ENCODE measurements at regions of chr5 and their contacts with region 1.

Region 1: GRCh38 chr5:87400305-87400899 is 12.3 kb downstream of the CCNH start:
- DNase-seq: peak; percentile 63
- H3K4me3 ChIP-seq: no peak overlapping the region
- H3K27ac ChIP-seq: no peak overlapping the region
- H3K4me1 ChIP-seq: peaks cover 6% of the 10 kb centered on the region
- CTCF ChIP-seq: peak; percentile 91

Region 2: DNA sequence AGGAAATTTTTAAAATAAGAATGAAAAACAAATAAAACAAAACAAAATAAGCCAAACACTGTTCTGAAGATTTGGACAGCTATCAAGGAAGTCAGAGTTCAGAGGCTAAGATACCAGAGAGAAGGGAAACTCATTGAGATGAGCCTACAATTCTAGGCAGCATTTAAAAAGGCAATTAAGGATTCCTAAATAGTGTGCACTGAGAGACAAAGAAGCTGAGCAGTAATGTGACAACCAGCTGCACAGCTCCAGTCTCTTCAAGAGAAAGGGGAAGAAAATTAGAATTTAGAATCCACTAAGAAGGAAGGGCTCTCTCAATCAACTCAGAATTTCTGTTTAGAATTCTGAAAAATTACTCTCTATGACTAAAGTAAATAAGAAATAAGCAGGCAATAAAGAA is 1029.3 kb before region 1 on chr5:
- CTCF ChIA-PET with region 1: no interaction called
- POLR2A ChIA-PET with region 1: no interaction called
- intact Hi-C with region 1: no loop called
- DNase-seq: no peak
- H3K4me3 ChIP-seq: no peak overlapping the region
- H3K27ac ChIP-seq: no peak overlapping the region
- H3K4me1 ChIP-seq: no peaks in the 10 kb centered on the region
- CTCF ChIP-seq: no peak

Region 3: DNA sequence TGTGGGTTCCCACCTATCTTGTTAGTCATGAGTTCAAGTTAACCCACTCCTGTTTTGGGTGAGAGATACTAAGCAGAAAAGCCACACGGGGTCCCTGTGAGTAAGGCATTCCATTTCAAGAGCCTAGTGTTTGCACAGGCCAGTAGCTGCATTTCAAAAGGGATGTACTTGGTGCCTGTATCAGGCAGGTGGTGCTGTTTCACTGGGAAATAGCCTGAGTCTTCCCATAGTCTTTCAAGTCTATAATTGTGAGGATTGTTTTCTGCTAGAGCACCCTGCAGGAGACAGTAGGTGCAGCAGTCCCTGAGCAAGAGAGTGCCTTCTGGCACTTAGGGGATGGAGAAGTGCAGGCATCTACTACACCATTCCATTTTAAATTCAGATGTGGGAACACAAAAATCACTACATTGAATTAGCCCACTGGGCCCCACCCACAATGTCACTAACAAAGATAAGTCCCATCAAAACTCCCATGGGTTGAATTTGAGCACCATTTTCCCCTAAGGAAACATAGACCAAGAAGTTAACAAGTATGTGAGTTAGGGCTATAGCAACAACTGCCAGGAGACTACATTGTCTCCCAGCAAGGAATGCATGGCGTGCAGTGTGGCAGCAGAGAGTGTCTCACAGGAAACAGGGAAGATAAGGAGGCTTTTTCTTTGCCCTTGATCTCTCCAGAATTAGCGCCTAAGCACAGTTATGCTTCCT is 519.5 kb before region 1 on chr5:
- CTCF ChIA-PET with region 1: interaction called, 4 read pairs
- POLR2A ChIA-PET with region 1: no interaction called
- intact Hi-C with region 1: loop called (anchors 5 kb)
- DNase-seq: peak; percentile 70
- H3K4me3 ChIP-seq: no peak overlapping the region
- H3K27ac ChIP-seq: no peak overlapping the region
- H3K4me1 ChIP-seq: no peaks in the 10 kb centered on the region
- CTCF ChIP-seq: peak; percentile 83

Region 4: DNA sequence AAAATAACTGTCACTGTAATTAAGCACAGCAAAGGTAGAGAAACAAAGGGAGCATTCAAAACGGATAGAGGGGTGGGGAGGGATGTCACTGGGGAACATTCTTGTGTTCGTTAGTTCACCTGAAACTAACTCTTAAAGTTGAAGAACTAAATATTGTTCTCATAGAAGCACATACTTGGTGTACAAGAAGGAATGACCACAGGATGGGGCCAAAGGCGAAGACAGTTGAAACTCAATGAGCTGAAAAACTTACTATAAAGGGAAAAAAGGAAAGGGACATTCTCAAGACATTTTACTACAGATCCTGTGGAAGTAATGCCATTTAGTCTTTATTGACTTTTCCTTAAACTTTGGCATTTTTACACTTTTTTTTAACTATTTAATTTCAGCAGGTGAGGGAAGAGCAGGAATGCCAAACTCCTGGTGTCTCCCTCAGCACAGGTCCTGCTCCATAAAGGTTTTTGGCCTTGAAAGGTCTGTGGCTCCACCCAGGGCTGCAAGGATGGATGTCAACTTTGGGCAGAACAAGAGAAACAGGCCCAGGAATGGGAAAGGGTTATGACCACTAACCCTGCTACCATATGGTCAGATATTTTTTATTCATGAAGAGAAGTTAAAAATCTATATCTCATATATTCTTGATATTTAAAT is 330.3 kb before region 1 on chr5:
- CTCF ChIA-PET with region 1: no interaction called
- POLR2A ChIA-PET with region 1: no interaction called
- intact Hi-C with region 1: loop called (anchors 5 kb)
- DNase-seq: peak; percentile 48
- H3K4me3 ChIP-seq: no peak overlapping the region
- H3K27ac ChIP-seq: no peak overlapping the region
- H3K4me1 ChIP-seq: peaks cover 23% of the 10 kb centered on the region
- CTCF ChIP-seq: peak; percentile 69

Region 5: DNA sequence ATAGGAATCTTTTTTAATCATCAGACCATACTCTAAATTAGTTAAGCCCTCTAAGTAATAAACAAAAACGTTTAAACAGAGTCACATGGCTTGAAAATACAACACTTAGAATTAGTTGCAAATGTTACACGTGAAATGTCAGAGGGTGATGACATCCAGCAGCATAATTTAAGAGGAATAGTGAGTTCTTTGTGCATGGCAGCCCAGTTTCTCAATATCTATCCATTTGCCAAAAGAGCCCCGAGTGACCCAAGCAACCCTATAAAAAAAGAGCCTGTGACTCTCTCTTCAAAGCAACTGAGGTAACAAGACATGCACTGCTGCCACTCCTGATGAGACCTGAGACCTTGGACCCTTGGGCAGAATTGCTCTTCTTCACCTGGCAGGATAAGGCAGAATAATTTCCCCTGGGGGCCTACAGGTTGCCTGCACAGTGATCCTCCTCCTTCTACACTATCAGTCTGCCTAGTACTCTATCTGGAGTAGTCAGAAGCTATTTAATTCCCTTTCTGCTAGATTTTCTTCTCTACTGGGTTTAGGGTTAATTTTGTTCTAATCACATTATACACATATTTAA is 229.5 kb before region 1 on chr5:
- CTCF ChIA-PET with region 1: no interaction called
- POLR2A ChIA-PET with region 1: no interaction called
- intact Hi-C with region 1: no loop called
- DNase-seq: no peak
- H3K4me3 ChIP-seq: no peak overlapping the region
- H3K27ac ChIP-seq: no peak overlapping the region
- H3K4me1 ChIP-seq: no peaks in the 10 kb centered on the region
- CTCF ChIP-seq: no peak

Region 6: GRCh38 chr5:87412630-87413342 is 12.4 kb after region 1 on chr5 and contains the start of gene CCNH:
- CTCF ChIA-PET with region 1: no interaction called
- POLR2A ChIA-PET with region 1: interaction called, 19 read pairs
- intact Hi-C with region 1: no loop called
- DNase-seq: peak; percentile 99
- H3K4me3 ChIP-seq: peak within 1 kb of the TSS; percentile 93
- H3K27ac ChIP-seq: peak within 1 kb of the TSS; percentile 59
- H3K4me1 ChIP-seq: peaks cover 28% of the 10 kb centered on the region
- CTCF ChIP-seq: no peak
- total RNA-seq, gene CCNH: 96.5 and 98.4 TPM in 2 replicates